Gastrocnemius medialis (tissue), 4 donors: ENCODE measurements at regions of chr9 and their contacts with region 1.

Region 1: DNA sequence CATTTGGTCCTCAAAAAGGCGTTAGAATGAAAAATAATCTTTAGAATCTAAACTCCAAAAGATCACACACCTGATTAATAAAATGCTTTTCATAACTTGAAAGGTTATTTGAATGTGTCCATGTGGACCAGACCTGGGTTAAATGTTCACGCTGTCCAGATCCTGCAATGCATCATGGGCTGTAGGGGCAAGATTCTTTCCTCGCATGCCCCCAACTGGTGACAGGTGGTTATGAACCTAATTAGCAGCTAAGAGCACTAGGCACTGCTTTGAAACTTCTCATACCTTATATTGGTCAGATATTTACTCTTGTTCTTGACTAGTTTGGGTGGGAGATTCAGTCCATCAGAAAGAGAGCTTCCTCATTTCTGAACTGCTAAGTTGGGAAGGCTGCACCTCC is 19.3 kb upstream of the PIP5K1B start:
- DNase-seq: no peak
- ATAC-seq: no peak
- H3K4me3 ChIP-seq: no peak overlapping the region
- H3K27ac ChIP-seq: no peak overlapping the region
- H3K4me1 ChIP-seq: no peaks in the 10 kb centered on the region
- H3K27me3 ChIP-seq: peaks cover 0 to under 1% (median 0%) of the 10 kb centered on the region in 3 donors
- CTCF ChIP-seq: no peak
- POLR2A ChIP-seq: no peak

Region 2: GRCh38 chr9:68595868-68596267 is 89.9 kb before region 1 on chr9:
- in situ Hi-C with region 1: loop called in 1 of 4 experiments (anchors 10 kb)
- intact Hi-C with region 1: no loop called
- DNase-seq: no peak
- ATAC-seq: no peak
- H3K4me3 ChIP-seq: no peak overlapping the region
- H3K27ac ChIP-seq: no peak overlapping the region
- H3K4me1 ChIP-seq: no peaks in the 10 kb centered on the region
- H3K27me3 ChIP-seq: no peaks in the 10 kb centered on the region
- CTCF ChIP-seq: no peak
- POLR2A ChIP-seq: no peak